ENCODE measurements at regions of chr11 and their contacts with region 1.

Region 1: GRCh38 chr11:110296226-110297075 is at the start of gene RDX:
- DNase-seq: no peak
- ATAC-seq: peak; percentile 73
- H3K4me3 ChIP-seq: peak within 1 kb of the TSS; percentile 98
- H3K27ac ChIP-seq: peak within 1 kb of the TSS; percentile 94
- H3K4me1 ChIP-seq: no peaks in the 10 kb centered on the region
- H3K27me3 ChIP-seq: no peaks in the 10 kb centered on the region
- CTCF ChIP-seq: peak in 1 of 3 experiments; percentile 20; a peak in 1 of 6 replicates
- EP300 ChIP-seq: no peak
- POLR2A ChIP-seq: peak; percentile 82
- RAD21 ChIP-seq: peak; percentile 38; the same call in 1 of the 2 replicates
- polyA plus RNA-seq, gene RDX: 37.4 to 40.3 TPM

Region 2: GRCh38 chr11:110279881-110280280 is 16.6 kb before region 1 on chr11:
- CTCF ChIA-PET with region 1: interaction called, 13 read pairs
- POLR2A ChIA-PET with region 1: no interaction called
- RAD21 ChIA-PET with region 1: no interaction called
- SMC1A ChIA-PET with region 1: interaction called, 4 read pairs
- in situ Hi-C with region 1: no loop called
- intact Hi-C with region 1: no loop called
- DNase-seq: no peak
- ATAC-seq: peak; percentile 30; the same call in 2 of the 3 replicates
- H3K4me3 ChIP-seq: no peak overlapping the region
- H3K27ac ChIP-seq: no peak overlapping the region
- H3K4me1 ChIP-seq: no peaks in the 10 kb centered on the region
- H3K27me3 ChIP-seq: no peaks in the 10 kb centered on the region
- CTCF ChIP-seq: no peak
- EP300 ChIP-seq: no peak
- POLR2A ChIP-seq: no peak
- RAD21 ChIP-seq: no peak

Region 3: DNA sequence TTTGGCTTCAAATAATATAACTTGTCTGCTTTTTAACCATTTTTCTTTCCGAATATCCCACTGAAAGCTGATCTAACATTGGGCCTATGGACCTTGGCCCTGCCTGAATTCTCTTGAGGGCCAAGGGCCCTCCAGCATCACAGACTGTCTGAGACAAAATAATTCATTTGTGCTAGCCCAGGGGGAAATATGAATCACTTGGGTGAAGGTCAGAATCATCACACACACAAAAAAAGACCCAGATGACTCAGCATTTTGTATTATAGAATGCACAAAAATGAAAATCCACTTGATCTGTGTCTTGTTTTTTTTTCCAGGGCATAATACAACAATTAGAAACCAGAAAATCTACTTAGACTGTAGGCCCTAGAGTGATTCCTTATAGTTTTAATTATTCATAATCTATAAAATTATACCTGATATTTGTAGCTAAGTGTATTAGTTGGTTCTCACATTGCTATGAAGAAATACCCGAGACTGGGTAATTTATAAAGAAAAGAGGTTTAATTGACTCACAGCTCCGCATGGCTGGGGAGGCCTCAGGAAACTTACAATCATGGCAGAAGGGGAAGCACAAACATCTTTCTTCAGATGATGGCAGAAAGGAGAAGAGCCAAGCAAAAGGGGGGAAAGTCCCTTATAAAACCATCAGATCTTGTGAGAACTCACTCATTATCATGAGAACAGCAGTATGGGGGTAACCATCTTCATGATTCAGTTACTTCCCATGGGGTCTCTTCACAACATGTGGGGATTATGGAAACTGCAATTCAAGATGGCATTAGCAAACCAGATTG is 15.5 kb after region 1 on chr11:
- CTCF ChIA-PET with region 1: interaction called, 5 read pairs
- POLR2A ChIA-PET with region 1: interaction called, 16 read pairs
- RAD21 ChIA-PET with region 1: interaction called, 3 read pairs
- SMC1A ChIA-PET with region 1: interaction called, 12 read pairs
- in situ Hi-C with region 1: no loop called
- intact Hi-C with region 1: no loop called
- DNase-seq: no peak
- ATAC-seq: peak; percentile 93
- H3K4me3 ChIP-seq: no peak overlapping the region
- H3K27ac ChIP-seq: peak overlapping the region; percentile 33; the same call in 1 of the 2 replicates
- H3K4me1 ChIP-seq: peaks cover 3% of the 10 kb centered on the region; the same call in 1 of the 2 replicates
- H3K27me3 ChIP-seq: no peaks in the 10 kb centered on the region
- CTCF ChIP-seq: no peak
- EP300 ChIP-seq: no peak
- POLR2A ChIP-seq: no peak
- RAD21 ChIP-seq: no peak

Region 4: DNA sequence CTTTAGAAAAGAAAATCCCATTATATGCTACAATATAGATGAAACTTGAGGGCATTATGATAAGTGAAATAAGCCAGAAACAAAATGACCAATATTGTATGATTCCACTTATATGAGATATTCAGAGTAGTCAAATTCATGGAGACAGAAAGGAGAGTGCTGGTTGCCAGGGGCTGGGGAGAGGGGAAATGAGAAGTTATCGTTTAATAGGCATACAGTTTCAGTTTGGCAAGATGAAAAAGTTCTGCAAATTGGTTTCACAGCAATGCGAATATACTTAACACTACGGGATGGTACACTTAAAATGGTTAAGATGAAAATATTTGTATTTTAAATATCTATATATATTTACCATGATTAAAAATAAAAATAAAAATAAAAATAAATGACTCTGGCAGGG is 31.1 kb after region 1 on chr11:
- CTCF ChIA-PET with region 1: interaction called, 4 read pairs
- POLR2A ChIA-PET with region 1: interaction called, 5 read pairs
- RAD21 ChIA-PET with region 1: interaction called, 17 read pairs
- SMC1A ChIA-PET with region 1: interaction called, 9 read pairs
- in situ Hi-C with region 1: no loop called
- intact Hi-C with region 1: loop called (anchors 1 kb)
- DNase-seq: no peak
- ATAC-seq: peak; percentile 41
- H3K4me3 ChIP-seq: peak overlapping the region; percentile 64
- H3K27ac ChIP-seq: peak overlapping the region; percentile 28; the same call in 1 of the 2 replicates
- H3K4me1 ChIP-seq: peaks cover 8% of the 10 kb centered on the region; the same call in 1 of the 2 replicates
- H3K27me3 ChIP-seq: no peaks in the 10 kb centered on the region
- CTCF ChIP-seq: no peak
- EP300 ChIP-seq: no peak
- POLR2A ChIP-seq: no peak
- RAD21 ChIP-seq: no peak

Region 5: GRCh38 chr11:110349138-110349996 is 52.9 kb after region 1 on chr11:
- CTCF ChIA-PET with region 1: interaction called, 8 read pairs
- POLR2A ChIA-PET with region 1: interaction called, 6 read pairs
- RAD21 ChIA-PET with region 1: interaction called, 5 read pairs
- SMC1A ChIA-PET with region 1: interaction called, 9 read pairs
- in situ Hi-C with region 1: no loop called
- intact Hi-C with region 1: loop called (anchors 1 kb)
- DNase-seq: peak; percentile 94
- ATAC-seq: peak; percentile 86
- H3K4me3 ChIP-seq: peak overlapping the region; percentile 38; the same call in 1 of the 2 replicates
- H3K27ac ChIP-seq: peak overlapping the region; percentile 96
- H3K4me1 ChIP-seq: peaks cover 43% of the 10 kb centered on the region
- H3K27me3 ChIP-seq: no peaks in the 10 kb centered on the region
- CTCF ChIP-seq: peak in 1 of 3 experiments; percentile 33; a peak in 2 of 6 replicates
- EP300 ChIP-seq: peak; percentile 94 to 99
- POLR2A ChIP-seq: peak; percentile 30; the same call in 1 of the 2 replicates
- RAD21 ChIP-seq: peak; percentile 51

Region 6: GRCh38 chr11:110429731-110430266 is 133.3 kb after region 1 on chr11 and contains the start of gene FDX1:
- CTCF ChIA-PET with region 1: interaction called, 3 read pairs
- POLR2A ChIA-PET with region 1: no interaction called
- RAD21 ChIA-PET with region 1: interaction called, 3 read pairs
- SMC1A ChIA-PET with region 1: no interaction called
- in situ Hi-C with region 1: no loop called
- intact Hi-C with region 1: loop called (anchors 10 kb)
- DNase-seq: peak; percentile 23
- ATAC-seq: peak; percentile 92
- H3K4me3 ChIP-seq: peak within 1 kb of the TSS; percentile 67
- H3K27ac ChIP-seq: peak within 1 kb of the TSS; percentile 47
- H3K4me1 ChIP-seq: peaks cover 10% of the 10 kb centered on the region
- H3K27me3 ChIP-seq: no peaks in the 10 kb centered on the region
- CTCF ChIP-seq: peak; percentile 41 to 61 (median 42); a peak in 5 of 6 replicates
- EP300 ChIP-seq: no peak
- POLR2A ChIP-seq: peak; percentile 78
- RAD21 ChIP-seq: no peak
- polyA plus RNA-seq, gene FDX1: 3.9 to 9.6 TPM

Measured in GM12878 (cell line).